ENCODE measurements at regions of chr10 and their contacts with region 1.

Region 1: GRCh38 chr10:101974091-101974971 is 81.6 kb downstream of the ARMH3 start:
- DNase-seq: peak; percentile 29
- H3K4me3 ChIP-seq: peak overlapping the region in 1 of 3 experiments; percentile 5
- H3K27ac ChIP-seq: peak overlapping the region; percentile 25
- H3K4me1 ChIP-seq: peaks cover 16% of the 10 kb centered on the region
- H3K27me3 ChIP-seq: no peaks in the 10 kb centered on the region
- CTCF ChIP-seq: no peak
- POLR2A ChIP-seq: no peak

Region 2: GRCh38 chr10:101759309-101760247 is 214.8 kb before region 1 on chr10:
- CTCF ChIA-PET with region 1: no interaction called
- POLR2A ChIA-PET with region 1: no interaction called
- dilution Hi-C with region 1: no loop called
- intact Hi-C with region 1: no loop called
- DNase-seq: no peak
- H3K4me3 ChIP-seq: no peak overlapping the region
- H3K27ac ChIP-seq: no peak overlapping the region
- H3K4me1 ChIP-seq: no peaks in the 10 kb centered on the region
- H3K27me3 ChIP-seq: peaks cover 3 to 15% of the 10 kb centered on the region in 2 experiments
- CTCF ChIP-seq: no peak
- POLR2A ChIP-seq: no peak

Region 3: DNA sequence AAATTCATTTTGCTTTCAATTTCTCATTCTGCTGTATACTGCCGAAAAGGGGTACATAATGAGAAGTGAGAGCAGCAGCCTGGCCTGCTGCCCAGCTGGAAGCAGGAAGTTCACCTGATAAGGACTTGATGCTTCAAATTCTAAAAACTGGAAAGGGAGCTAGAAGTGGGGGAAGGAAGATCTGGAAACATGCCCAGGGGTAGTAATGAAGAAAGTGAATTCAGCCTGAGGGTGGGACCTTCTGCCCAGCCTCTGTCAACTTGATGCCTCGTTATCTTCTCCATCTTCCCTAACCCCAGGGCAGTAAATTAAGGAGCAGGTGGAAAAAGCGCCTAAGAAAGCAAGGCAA is 12.3 kb after region 1 on chr10:
- CTCF ChIA-PET with region 1: no interaction called
- POLR2A ChIA-PET with region 1: no interaction called
- dilution Hi-C with region 1: no loop called
- intact Hi-C with region 1: loop called (anchors 1 kb)
- DNase-seq: peak; percentile 47
- H3K4me3 ChIP-seq: no peak overlapping the region
- H3K27ac ChIP-seq: no peak overlapping the region
- H3K4me1 ChIP-seq: peaks cover 7% of the 10 kb centered on the region
- H3K27me3 ChIP-seq: no peaks in the 10 kb centered on the region
- CTCF ChIP-seq: no peak
- POLR2A ChIP-seq: no peak

Region 4: DNA sequence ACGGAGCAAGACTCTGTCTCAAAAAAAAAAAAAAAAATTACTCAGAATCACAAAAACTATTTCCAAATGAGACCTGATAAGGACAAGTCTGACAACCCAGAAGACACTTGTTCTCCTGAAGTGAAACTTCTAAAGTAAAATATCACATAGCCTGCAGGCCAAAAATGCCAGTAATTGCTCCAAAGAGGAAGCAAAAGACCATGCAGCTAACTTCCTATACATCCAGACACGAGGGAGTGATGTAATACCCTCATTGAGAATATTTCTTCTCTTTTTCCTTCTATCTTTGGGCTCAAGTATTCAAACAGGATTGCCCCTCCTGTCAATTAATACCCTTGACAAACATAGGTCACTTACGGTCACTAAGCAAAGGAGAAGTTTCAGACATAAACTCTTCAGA is 50.5 kb after region 1 on chr10:
- CTCF ChIA-PET with region 1: no interaction called
- POLR2A ChIA-PET with region 1: no interaction called
- dilution Hi-C with region 1: no loop called
- intact Hi-C with region 1: no loop called
- DNase-seq: no peak
- H3K4me3 ChIP-seq: no peak overlapping the region
- H3K27ac ChIP-seq: no peak overlapping the region
- H3K4me1 ChIP-seq: no peaks in the 10 kb centered on the region
- H3K27me3 ChIP-seq: no peaks in the 10 kb centered on the region
- CTCF ChIP-seq: no peak
- POLR2A ChIP-seq: no peak

Region 5: GRCh38 chr10:102208311-102209035 is 234.1 kb after region 1 on chr10:
- CTCF ChIA-PET with region 1: no interaction called
- POLR2A ChIA-PET with region 1: no interaction called
- dilution Hi-C with region 1: no loop called
- intact Hi-C with region 1: no loop called
- DNase-seq: peak; percentile 55
- H3K4me3 ChIP-seq: no peak overlapping the region
- H3K27ac ChIP-seq: no peak overlapping the region
- H3K4me1 ChIP-seq: no peaks in the 10 kb centered on the region
- H3K27me3 ChIP-seq: peaks cover 12 to 27% of the 10 kb centered on the region in 2 experiments
- CTCF ChIP-seq: no peak
- POLR2A ChIP-seq: no peak

Region 6: GRCh38 chr10:102399217-102400089 is 425.1 kb after region 1 on chr10:
- CTCF ChIA-PET with region 1: no interaction called
- POLR2A ChIA-PET with region 1: no interaction called
- dilution Hi-C with region 1: no loop called
- intact Hi-C with region 1: no loop called
- DNase-seq: peak; percentile 82
- H3K4me3 ChIP-seq: peak overlapping the region in 2 of 3 experiments; percentile 15 to 48
- H3K27ac ChIP-seq: no peak overlapping the region
- H3K4me1 ChIP-seq: peaks cover 13% of the 10 kb centered on the region
- H3K27me3 ChIP-seq: no peaks in the 10 kb centered on the region
- CTCF ChIP-seq: peak; percentile 93 to 96
- POLR2A ChIP-seq: no peak

Measured in endothelial cell of umbilical vein (primary cell).